Ascending aorta (tissue), 2 donors: ENCODE measurements at regions of chr17 and their contacts with region 1.

Region 1: DNA sequence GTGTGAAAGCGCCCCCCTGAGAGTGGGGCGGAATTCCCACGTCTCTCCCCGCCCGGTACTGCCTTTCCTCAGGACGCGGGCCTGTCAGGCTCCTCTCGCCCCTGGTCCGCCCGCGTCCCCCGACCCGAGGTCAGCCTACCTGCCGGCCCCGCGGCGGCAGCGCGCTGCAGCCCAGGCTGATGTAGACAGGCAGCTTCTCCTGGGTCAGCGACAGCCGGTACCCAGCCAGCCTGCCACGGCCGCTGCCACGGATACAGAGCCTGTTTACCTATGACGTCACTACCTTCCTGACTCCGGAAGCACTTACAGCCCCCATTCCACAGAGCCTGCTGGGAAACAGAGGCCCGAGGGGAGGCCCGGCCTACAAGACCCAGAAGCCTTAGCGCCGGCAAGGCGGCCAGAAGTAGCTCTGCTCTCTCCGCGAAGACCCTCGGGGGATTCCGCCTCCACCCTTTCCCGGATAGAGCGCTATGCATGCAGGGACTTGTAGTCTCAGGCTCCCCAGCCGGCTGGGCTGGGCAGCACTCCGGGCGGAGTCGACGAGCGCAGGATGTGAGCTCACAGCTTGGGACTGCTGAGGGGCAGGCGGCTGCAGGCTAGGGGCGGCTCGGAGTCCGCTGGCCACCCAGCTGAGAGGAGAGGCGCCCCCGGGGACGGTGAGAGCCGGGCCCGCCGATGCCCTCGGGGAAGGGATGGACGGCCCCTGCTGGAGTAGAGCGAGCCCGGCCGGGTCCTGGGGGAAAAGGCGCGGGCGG is at the starts of genes IFT20 and TNFAIP1:
- DNase-seq: peak; percentile 99 to 100
- H3K4me3 ChIP-seq: peak within 1 kb of the TSS; percentile 93 to 95
- H3K27ac ChIP-seq: peak within 1 kb of the TSS; percentile 93 to 96
- H3K4me1 ChIP-seq: peaks cover 27 to 36% of the 10 kb centered on the region in 2 donors
- H3K27me3 ChIP-seq: no peaks in the 10 kb centered on the region
- CTCF ChIP-seq: no peak
- total RNA-seq, gene IFT20: 13.6 TPM
- total RNA-seq, gene TNFAIP1: 66.4 TPM

Region 2: GRCh38 chr17:28041068-28041843 is 294.1 kb before region 1 on chr17:
- intact Hi-C with region 1: loop called (anchors 5 kb)
- DNase-seq: peak; percentile 98 to 100
- H3K4me3 ChIP-seq: peak overlapping the region; percentile 60 to 93
- H3K27ac ChIP-seq: peak overlapping the region; percentile 78 to 81
- H3K4me1 ChIP-seq: peaks cover 9 to 14% of the 10 kb centered on the region in 2 donors
- H3K27me3 ChIP-seq: no peaks in the 10 kb centered on the region
- CTCF ChIP-seq: no peak

Region 3: DNA sequence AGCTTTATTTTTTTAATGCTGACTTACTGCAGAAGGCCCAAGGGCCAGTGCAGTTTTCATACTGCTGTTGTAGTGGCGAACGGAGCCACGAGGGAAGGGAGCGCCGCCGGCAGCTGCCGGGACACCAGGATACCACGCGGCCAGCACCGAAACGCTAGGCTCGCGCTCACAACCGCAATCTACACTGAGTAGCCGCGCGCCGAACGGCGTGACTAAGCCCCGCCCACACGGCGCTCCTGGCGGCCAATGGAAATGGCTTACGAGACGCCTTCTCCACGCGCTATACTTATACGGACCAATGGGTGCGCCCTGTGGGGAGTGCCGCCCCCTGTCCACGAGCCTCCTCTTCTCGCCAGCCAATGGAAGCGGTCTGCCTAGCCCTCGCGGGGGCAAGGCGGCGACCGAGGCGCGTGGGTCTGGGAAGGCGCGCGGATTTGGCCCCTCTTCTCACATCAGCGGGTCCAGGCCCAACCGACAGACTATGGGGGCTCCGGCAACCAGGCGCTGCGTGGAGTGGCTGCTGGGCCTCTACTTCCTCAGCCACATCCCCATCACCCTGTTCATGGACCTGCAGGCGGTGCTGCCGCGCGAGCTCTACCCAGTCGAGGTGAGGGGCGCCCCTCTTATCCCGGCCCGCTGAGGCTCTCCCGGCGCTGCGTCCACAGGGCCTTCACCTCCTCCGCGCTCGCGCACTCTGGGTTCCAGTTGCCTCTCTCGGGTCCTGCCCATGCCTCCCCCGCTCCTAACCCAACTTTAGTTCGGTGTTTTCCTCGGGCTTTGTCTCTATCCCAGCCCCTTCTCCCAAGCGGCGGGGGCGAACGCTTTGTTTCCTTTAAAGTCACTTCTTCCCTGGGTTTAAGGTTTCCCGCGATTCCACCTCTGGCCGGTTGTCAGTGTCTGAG is 16.4 kb before region 1 on chr17 and contains the start of gene TMEM97:
- intact Hi-C with region 1: loop called (anchors 1 kb)
- DNase-seq: peak; percentile 87 to 97
- H3K4me3 ChIP-seq: peak within 1 kb of the TSS; percentile 67 to 72
- H3K27ac ChIP-seq: peak within 1 kb of the TSS; percentile 12 to 51
- H3K4me1 ChIP-seq: peaks cover 5 to 13% of the 10 kb centered on the region in 2 donors
- H3K27me3 ChIP-seq: no peaks in the 10 kb centered on the region
- CTCF ChIP-seq: no peak
- total RNA-seq, gene TMEM97: not detected

Region 4: DNA sequence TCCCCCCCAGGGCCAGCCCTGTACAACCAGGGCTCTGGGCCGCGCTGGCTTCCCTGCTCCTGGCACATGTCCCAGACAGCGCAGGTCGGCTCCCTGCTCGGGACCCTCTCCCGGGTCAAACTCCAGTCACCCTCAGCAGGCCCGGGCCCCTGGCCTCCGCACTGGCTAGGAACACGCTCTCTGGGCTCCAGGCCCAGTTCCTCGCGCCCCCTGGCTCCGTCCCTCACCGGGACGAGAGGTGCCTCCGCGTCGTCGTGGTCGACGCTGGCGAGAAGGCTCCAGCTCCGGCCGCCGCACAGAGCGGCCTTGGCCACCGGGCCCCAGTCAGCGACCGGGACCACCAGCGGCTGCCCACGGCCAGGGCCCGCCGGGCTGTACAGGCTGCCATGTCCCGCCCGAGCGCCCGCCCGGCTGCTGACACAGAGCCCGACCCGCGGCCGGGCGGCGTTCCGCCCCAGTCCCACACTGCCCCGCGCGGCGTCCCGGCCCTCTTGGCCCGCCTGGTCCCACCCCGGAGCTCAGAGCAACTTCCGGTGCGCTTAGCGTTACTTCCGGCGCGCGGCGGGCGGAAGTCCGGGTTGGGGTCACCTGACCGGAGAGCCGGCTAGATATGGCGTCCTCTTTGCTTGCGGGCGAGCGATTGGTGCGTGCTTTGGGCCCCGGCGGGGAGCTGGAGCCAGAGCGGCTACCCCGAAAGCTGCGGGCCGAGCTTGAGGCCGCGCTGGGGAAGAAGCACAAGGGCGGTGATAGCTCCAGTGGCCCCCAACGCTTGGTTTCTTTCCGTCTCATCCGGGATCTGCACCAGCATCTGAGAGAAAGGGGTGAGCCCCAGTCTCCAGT is 21.9 kb after region 1 on chr17 and contains the start of gene POLDIP2:
- intact Hi-C with region 1: loop called (anchors 1 kb)
- DNase-seq: peak; percentile 75 to 97
- H3K4me3 ChIP-seq: peak within 1 kb of the TSS; percentile 93 to 99
- H3K27ac ChIP-seq: peak within 1 kb of the TSS; percentile 92 to 95
- H3K4me1 ChIP-seq: peaks cover 3 to 17% of the 10 kb centered on the region in 2 donors
- H3K27me3 ChIP-seq: no peaks in the 10 kb centered on the region
- CTCF ChIP-seq: peak in 1 of 3 experiments; percentile 14
- total RNA-seq, gene POLDIP2: 82.2 TPM

Region 5: DNA sequence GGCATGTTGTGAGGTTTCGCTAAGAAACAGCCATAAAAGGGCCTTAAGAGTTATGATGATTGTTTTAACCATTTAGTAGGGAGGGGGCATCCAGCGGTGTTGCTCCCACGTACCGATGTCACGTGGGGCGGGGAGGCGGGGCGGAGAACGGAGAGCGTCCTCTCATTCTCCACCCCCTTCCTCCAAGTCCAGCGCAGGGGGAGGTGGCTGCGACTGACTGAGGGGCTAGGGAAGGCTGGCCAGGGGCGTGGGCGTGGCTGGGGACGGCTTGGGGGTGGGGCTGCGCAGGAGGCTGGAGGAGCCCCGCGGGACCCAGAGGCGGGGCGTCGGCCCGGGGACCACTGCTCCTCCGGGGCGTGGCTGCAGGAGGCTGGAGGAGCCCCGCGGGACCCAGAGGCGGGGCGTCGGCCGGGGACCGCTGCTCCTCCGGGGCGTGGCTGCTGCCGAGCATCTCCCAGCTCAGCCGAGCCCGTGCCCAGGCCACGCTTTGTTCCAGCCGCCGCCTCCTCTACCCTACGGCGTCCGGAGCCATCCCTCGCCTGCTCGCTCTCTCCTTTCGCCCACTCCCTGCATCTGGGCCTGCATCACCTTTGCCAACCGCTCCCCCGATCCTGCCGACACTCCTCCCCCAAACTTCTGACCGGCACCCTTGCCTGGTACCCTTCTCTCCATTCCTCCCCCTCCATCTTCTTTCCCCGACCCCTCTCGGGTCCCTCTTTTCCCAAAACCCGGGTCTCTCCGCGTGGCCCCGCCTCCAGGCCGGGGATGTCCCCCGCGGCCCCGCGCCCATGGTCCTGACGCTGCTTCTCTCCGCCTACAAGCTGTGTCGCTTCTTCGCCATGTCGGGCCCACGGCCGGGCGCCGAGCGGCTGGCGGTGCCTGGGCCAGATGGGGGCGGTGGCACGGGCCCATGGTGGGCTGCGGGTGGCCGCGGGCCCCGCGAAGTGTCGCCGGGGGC is 36.1 kb after region 1 on chr17 and contains the start of gene SARM1:
- intact Hi-C with region 1: loop called (anchors 1 kb)
- DNase-seq: peak; percentile 54 to 94
- H3K4me3 ChIP-seq: peak within 1 kb of the TSS; percentile 70 to 77
- H3K27ac ChIP-seq: peak within 1 kb of the TSS; percentile 75 to 86
- H3K4me1 ChIP-seq: peaks cover 12% of the 10 kb centered on the region in 2 donors
- H3K27me3 ChIP-seq: no peaks in the 10 kb centered on the region
- CTCF ChIP-seq: no peak
- total RNA-seq, gene SARM1: 121 TPM

Region 6: DNA sequence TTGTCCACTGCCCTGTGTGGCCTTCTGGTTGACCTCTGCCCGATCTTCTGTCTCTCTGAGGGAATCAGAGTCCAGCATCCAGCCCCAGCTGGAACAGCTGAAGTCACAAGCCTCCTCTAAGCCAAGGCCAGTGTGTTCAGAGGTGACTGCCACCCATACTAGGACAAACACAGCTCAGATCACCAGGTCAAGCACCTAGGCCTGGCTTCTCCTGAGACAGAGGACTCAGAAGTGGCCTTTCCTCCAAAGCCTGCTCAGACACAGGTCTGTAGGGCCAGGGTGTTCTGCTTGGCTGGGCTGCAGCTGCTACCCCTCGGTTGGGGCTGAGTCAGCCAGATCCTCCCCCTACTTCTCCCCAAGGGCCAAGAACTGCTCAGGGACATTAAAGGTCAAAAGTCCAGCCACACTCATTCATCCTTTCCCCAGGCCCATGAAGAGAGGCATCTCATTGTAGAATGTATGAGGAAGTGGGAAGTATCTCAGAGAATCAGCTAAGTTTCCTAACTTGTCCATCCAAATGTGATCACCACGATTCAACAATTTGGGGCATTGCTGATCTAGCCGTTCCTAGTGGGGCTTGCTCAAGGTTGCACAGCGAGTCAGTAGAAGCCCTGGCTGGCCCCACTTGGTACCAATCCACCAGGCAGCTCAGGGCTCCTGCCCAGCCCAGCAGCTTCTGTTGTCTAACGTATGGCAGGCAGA is 63.1 kb after region 1 on chr17:
- intact Hi-C with region 1: no loop called
- DNase-seq: no peak
- H3K4me3 ChIP-seq: no peak overlapping the region
- H3K27ac ChIP-seq: no peak overlapping the region
- H3K4me1 ChIP-seq: no peaks in the 10 kb centered on the region
- H3K27me3 ChIP-seq: no peaks in the 10 kb centered on the region
- CTCF ChIP-seq: no peak

Region 7: DNA sequence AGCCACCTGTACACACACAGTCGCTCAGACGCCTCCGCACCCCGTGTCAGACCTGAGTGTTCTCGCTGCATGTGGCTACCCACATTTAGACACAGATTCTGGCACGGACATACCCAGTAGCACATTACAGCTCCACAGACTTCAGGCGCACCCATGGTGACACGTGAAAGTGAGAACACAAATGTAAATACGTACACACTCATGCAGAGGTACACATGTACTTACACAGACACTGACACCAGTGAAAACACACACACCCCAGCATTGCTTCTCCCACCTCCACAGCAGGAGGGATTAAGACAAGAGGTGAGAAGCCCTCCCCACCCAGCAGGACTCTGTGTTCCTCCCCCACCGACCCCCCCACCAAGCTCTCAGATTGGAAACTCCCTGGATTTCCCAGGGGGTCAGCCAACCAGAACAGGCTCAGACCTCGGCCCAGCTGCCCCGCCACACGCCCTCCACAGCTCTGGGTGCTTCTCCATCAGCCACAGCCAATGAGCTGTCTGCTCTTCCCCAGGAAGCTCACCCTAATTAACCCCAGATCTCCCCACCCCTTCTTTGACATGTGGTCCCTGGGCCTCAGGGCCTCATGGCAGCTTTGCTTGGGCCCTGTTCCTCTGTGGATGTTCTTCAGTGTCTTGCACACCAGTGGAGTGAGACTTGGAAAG is 165.5 kb after region 1 on chr17:
- intact Hi-C with region 1: no loop called
- DNase-seq: no peak
- H3K4me3 ChIP-seq: no peak overlapping the region
- H3K27ac ChIP-seq: no peak overlapping the region
- H3K4me1 ChIP-seq: no peaks in the 10 kb centered on the region
- H3K27me3 ChIP-seq: no peaks in the 10 kb centered on the region
- CTCF ChIP-seq: no peak

Region 8: GRCh38 chr17:28644985-28645939 is 309.9 kb after region 1 on chr17 and contains the start of gene BLTP2:
- intact Hi-C with region 1: loop called (anchors 5 kb)
- DNase-seq: peak; percentile 81 to 97
- H3K4me3 ChIP-seq: peak within 1 kb of the TSS; percentile 91 to 95
- H3K27ac ChIP-seq: peak within 1 kb of the TSS; percentile 93 to 94
- H3K4me1 ChIP-seq: peaks cover 5 to 27% of the 10 kb centered on the region in 2 donors
- H3K27me3 ChIP-seq: no peaks in the 10 kb centered on the region
- CTCF ChIP-seq: no peak
- total RNA-seq, gene BLTP2: 104 TPM